ENCODE measurements at regions of chr4 and their contacts with region 1.

Region 1: GRCh38 chr4:128809477-128810330 is at the start of gene JADE1:
- DNase-seq: peak; percentile 91 to 94 (median 93)
- ATAC-seq: peak; percentile 65 to 83 (median 74)
- H3K4me3 ChIP-seq: peak within 1 kb of the TSS; percentile 64 to 94 (median 88)
- H3K27ac ChIP-seq: peak within 1 kb of the TSS; percentile 90 to 97 (median 96)
- H3K4me1 ChIP-seq: peaks cover 0 to 23% (median 7%) of the 10 kb centered on the region in 12 donors
- H3K27me3 ChIP-seq: no peaks in the 10 kb centered on the region
- CTCF ChIP-seq: peak; percentile 46 to 71 (median 57)
- POLR2A ChIP-seq: peak in 1 of 2 donors; percentile 63
- total RNA-seq, gene JADE1: 18.1 to 31.9 (median 22.7) TPM

Region 2: GRCh38 chr4:128191115-128191781 is 618.5 kb before region 1 on chr4:
- intact Hi-C with region 1: loop called in 1 of 10 experiments (anchors 5 kb)
- DNase-seq: peak in 4 of 5 donors; percentile 43 to 60 (median 50)
- ATAC-seq: peak; percentile 61 to 89 (median 84)
- H3K4me3 ChIP-seq: no peak overlapping the region
- H3K27ac ChIP-seq: no peak overlapping the region
- H3K4me1 ChIP-seq: peaks cover 0 to 11% (median 3%) of the 10 kb centered on the region in 12 donors
- H3K27me3 ChIP-seq: no peaks in the 10 kb centered on the region
- CTCF ChIP-seq: peak; percentile 74 to 90 (median 85)
- POLR2A ChIP-seq: no peak

Region 3: DNA sequence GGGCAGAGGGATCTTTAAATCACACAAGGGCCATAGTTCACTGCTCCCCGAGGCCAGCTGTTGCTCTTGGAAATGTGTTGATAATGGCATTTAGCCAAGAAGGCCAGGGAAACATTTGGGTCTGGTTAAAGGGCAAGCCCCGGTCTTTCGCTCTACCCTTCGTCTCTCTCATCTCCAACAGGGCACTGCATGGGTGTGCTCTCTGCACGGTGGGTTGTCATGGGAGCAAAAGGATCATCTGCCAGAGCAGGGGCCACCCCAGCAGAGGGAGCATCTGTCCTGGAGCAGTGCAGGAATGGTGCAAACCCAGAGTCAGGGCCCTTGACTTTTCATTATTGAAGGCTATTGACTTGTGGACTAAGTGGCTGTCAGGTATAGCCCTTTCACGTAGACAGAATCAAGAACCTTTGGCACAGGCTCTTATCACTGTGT is 499.4 kb before region 1 on chr4:
- intact Hi-C with region 1: loop called in 1 of 10 experiments (anchors 10 kb)
- DNase-seq: peak in 4 of 5 donors; percentile 22 to 42 (median 30)
- ATAC-seq: peak; percentile 76 to 89 (median 86)
- H3K4me3 ChIP-seq: no peak overlapping the region
- H3K27ac ChIP-seq: peak overlapping the region in 2 of 12 donors; percentile 32 to 64
- H3K4me1 ChIP-seq: peaks cover 0 to 34% (median 9%) of the 10 kb centered on the region in 12 donors
- H3K27me3 ChIP-seq: no peaks in the 10 kb centered on the region
- CTCF ChIP-seq: peak in 11 of 12 donors; percentile 8 to 58 (median 36)
- POLR2A ChIP-seq: no peak

Region 4: GRCh38 chr4:128565565-128566186 is 244.0 kb before region 1 on chr4:
- intact Hi-C with region 1: loop called in 7 of 10 experiments (anchors 2 to 5 kb)
- DNase-seq: peak; percentile 35 to 68 (median 51)
- ATAC-seq: peak; percentile 65 to 81 (median 78)
- H3K4me3 ChIP-seq: no peak overlapping the region
- H3K27ac ChIP-seq: no peak overlapping the region
- H3K4me1 ChIP-seq: peaks cover 0 to 12% (median 0%) of the 10 kb centered on the region in 12 donors
- H3K27me3 ChIP-seq: no peaks in the 10 kb centered on the region
- CTCF ChIP-seq: peak; percentile 27 to 66 (median 57)
- POLR2A ChIP-seq: no peak

Region 5: GRCh38 chr4:128590773-128591172 is 218.9 kb before region 1 on chr4:
- intact Hi-C with region 1: loop called in 1 of 10 experiments (anchors 10 kb)
- DNase-seq: peak in 2 of 5 donors; percentile 33 to 35
- ATAC-seq: peak; percentile 82 to 91 (median 90)
- H3K4me3 ChIP-seq: no peak overlapping the region
- H3K27ac ChIP-seq: peak overlapping the region in 10 of 12 donors; percentile 8 to 55 (median 26)
- H3K4me1 ChIP-seq: peaks cover 0 to 21% (median 6%) of the 10 kb centered on the region in 12 donors
- H3K27me3 ChIP-seq: no peaks in the 10 kb centered on the region
- CTCF ChIP-seq: no peak
- POLR2A ChIP-seq: no peak

Region 6: DNA sequence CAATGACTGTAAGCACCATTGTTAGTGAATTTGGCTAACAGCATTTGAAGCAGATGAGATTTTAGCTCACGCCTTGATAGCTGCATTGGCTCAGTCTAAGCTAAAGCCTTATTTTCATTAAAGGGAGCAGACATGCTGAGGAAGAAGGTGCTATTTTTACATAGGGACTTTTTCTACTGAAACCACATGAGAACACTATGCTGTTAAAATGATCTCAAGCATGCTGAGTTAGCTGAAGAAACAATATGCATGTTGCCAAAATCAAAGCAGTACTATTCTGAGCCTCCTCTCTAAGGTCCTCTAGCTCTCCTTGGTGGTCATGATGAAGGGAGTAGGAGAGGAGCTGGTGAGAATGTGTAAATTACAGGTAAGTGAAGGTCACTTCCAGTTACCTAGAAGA is 134.6 kb before region 1 on chr4:
- intact Hi-C with region 1: no loop called
- DNase-seq: no peak
- ATAC-seq: peak; percentile 45 to 77 (median 65)
- H3K4me3 ChIP-seq: no peak overlapping the region
- H3K27ac ChIP-seq: peak overlapping the region in 2 of 12 donors; percentile 2 to 34
- H3K4me1 ChIP-seq: peaks cover 0 to 6% (median 0%) of the 10 kb centered on the region in 12 donors
- H3K27me3 ChIP-seq: no peaks in the 10 kb centered on the region
- CTCF ChIP-seq: peak in 4 of 12 donors; percentile 17 to 40 (median 22)
- POLR2A ChIP-seq: no peak

Region 7: DNA sequence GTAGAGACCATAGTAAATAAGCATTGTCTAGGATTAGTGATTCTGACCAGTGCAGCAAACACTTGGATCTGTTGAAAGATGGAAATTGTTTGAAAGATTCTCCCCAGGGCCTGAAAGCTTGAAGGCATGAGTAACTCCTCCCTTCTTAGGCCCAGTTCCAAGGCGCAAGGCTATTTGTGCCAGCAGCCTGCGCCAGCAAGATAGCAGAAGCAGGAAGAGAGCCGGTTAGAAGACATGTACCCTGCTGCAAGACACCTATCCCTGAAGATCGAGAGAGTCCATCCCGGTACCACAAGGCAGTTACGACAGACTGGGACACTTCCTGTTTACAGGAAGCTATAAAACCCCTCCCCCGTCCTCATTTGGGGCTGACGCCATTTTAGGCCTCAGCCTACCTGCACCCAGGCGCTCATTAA is 72.6 kb before region 1 on chr4:
- intact Hi-C with region 1: loop called in 1 of 10 experiments (anchors 10 kb)
- DNase-seq: peak in 3 of 5 donors; percentile 24 to 64 (median 40)
- ATAC-seq: peak; percentile 28 to 76 (median 70)
- H3K4me3 ChIP-seq: no peak overlapping the region
- H3K27ac ChIP-seq: peak overlapping the region in 2 of 12 donors; percentile 4 to 32
- H3K4me1 ChIP-seq: peaks cover 0 to 4% (median 0%) of the 10 kb centered on the region in 12 donors
- H3K27me3 ChIP-seq: no peaks in the 10 kb centered on the region
- CTCF ChIP-seq: no peak
- POLR2A ChIP-seq: no peak

Region 8: GRCh38 chr4:128863312-128864075 is 53.8 kb after region 1 on chr4:
- intact Hi-C with region 1: loop called in 7 of 10 experiments (anchors 2 to 5 kb)
- DNase-seq: peak; percentile 75 to 81 (median 76)
- ATAC-seq: peak in 3 of 4 donors; percentile 66 to 68 (median 67)
- H3K4me3 ChIP-seq: no peak overlapping the region
- H3K27ac ChIP-seq: peak overlapping the region in 4 of 12 donors; percentile 16 to 42 (median 24)
- H3K4me1 ChIP-seq: peaks cover 0 to 45% (median 28%) of the 10 kb centered on the region in 12 donors
- H3K27me3 ChIP-seq: no peaks in the 10 kb centered on the region
- CTCF ChIP-seq: peak; percentile 80 to 95 (median 90)
- POLR2A ChIP-seq: no peak

Measured in heart left ventricle (tissue), 16 donors.